ENCODE measurements at regions of chr2 and their contacts with region 1.

Region 1: DNA sequence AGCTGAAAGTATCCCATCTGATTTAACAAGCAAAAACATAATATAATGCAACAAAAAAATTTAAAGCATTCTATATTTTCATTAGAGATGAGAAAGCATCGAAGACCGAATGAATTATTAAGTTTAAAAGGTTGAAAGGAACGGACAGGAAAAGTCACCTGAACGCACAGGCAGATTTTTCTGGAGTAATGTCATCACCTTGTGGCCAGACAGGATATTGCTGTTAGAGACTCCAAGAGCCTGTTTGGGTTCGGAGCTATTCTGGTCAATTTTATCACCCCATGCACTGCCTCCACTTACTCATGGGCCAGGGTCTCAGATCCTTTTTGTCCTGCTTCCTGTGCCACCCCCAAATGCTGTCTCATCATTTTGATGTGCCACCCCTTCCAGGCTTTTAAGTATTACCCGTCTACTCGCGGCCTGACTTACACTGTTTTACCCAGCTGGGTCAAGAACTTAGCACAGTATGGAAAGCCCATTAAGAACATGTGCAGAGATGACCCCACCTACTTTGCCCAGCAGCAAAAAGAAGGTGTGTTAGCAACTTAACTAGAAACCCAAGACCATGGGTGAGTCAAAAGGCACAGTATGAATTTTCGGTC is 27.3 kb downstream of the GKN2 start:
- DNase-seq: peak; percentile 48
- ATAC-seq: peak; percentile 94
- H3K4me3 ChIP-seq: no peak overlapping the region
- H3K27ac ChIP-seq: no peak overlapping the region
- H3K4me1 ChIP-seq: no peaks in the 10 kb centered on the region; a peak in 1 of 4 replicates
- H3K27me3 ChIP-seq: no peaks in the 10 kb centered on the region
- CTCF ChIP-seq: peak; percentile 87 to 89 (median 89)
- POLR2A ChIP-seq: no peak
- RAD21 ChIP-seq: peak; percentile 93

Region 2: DNA sequence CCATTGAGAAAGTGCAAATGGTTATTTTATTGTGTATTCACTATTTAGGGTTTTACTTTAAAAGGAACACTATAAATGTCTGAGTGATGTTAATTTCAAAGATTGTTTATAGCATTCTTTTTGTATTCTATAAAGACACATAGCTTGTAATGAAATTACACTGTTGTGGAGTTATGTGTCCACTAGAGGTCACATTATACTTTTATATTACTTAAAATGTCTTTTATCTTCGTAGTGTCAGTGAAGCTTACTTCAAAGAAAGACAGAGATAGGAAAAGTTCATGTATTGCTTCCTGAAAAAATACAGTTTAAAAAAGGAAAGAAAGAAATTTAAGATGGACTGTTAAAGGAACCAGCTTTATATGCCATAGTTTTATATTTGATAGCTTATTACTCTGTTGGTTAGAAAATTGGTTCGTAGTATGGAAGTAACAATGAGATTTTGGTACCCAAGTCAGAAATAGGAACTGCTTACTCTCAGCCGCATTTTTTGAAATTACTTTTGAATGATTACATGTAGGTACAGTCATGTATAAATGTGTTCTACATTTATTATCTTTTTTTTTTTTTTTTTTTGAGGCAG is 437.5 kb before region 1 on chr2:
- CTCF ChIA-PET with region 1: interaction called, 20 read pairs
- POLR2A ChIA-PET with region 1: no interaction called
- RAD21 ChIA-PET with region 1: interaction called in 1 of 2 experiments, 4 read pairs
- intact Hi-C with region 1: loop called (anchors 1 kb)
- DNase-seq: no peak
- ATAC-seq: peak; percentile 54; the same call in 1 of the 2 replicates
- H3K4me3 ChIP-seq: no peak overlapping the region
- H3K27ac ChIP-seq: no peak overlapping the region
- H3K4me1 ChIP-seq: peaks cover 6 to 8% of the 10 kb centered on the region in 2 experiments; a peak in 3 of 4 replicates
- H3K27me3 ChIP-seq: no peaks in the 10 kb centered on the region
- CTCF ChIP-seq: peak; percentile 35 to 67 (median 38); a peak in 5 of 6 replicates
- POLR2A ChIP-seq: no peak
- RAD21 ChIP-seq: peak; percentile 61

Region 3: GRCh38 chr2:68721482-68722101 is 203.8 kb before region 1 on chr2:
- CTCF ChIA-PET with region 1: interaction called, 28 read pairs
- POLR2A ChIA-PET with region 1: no interaction called
- RAD21 ChIA-PET with region 1: interaction called in 1 of 2 experiments, 6 read pairs
- intact Hi-C with region 1: no loop called
- DNase-seq: peak; percentile 68
- ATAC-seq: peak; percentile 92
- H3K4me3 ChIP-seq: peak overlapping the region in 1 of 2 experiments; percentile 27; a peak in 3 of 4 replicates
- H3K27ac ChIP-seq: peak overlapping the region; percentile 18; the same call in 1 of the 2 replicates
- H3K4me1 ChIP-seq: peaks cover 15 to 20% of the 10 kb centered on the region in 2 experiments
- H3K27me3 ChIP-seq: peaks cover 26% of the 10 kb centered on the region
- CTCF ChIP-seq: no peak
- POLR2A ChIP-seq: no peak
- RAD21 ChIP-seq: no peak

Region 4: DNA sequence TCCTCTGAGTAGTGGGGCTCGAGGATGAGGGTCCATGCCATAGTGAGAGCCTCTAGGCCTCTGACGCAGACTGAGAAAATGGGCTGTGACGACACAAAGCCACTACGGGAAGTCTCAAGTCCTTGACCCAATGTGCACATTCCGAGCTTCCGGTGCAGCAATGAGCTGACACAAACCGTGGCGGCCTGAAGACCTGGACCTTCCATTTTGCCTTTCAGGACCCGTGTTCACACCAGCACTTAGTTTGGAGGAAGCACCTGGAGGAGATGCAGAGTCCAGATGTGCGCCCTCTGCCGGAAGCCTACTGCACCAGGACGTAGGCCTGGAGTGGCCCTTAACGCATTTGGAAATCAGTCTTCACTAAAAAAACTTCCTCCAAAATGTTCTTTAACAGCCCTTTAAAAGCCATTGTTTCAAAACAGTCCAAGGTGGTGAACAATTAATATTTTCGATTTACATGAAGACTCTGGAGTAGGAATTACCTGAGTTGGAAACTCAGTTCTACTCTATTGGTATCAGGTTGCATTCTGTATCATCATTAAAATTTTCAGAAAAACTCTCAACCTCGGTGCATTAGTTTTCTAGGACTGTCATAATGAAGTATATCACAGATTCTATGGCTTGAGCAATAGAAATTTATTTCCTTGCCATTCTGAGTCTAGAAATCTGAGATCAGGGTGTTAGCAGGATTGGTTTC is 88.1 kb before region 1 on chr2:
- CTCF ChIA-PET with region 1: interaction called, 16 read pairs
- POLR2A ChIA-PET with region 1: no interaction called
- RAD21 ChIA-PET with region 1: interaction called, 3 read pairs
- intact Hi-C with region 1: loop called (anchors 5 kb)
- DNase-seq: peak; percentile 58
- ATAC-seq: peak; percentile 98
- H3K4me3 ChIP-seq: no peak overlapping the region
- H3K27ac ChIP-seq: no peak overlapping the region
- H3K4me1 ChIP-seq: peaks cover 0 to 5% of the 10 kb centered on the region in 2 experiments; a peak in 1 of 4 replicates
- H3K27me3 ChIP-seq: no peaks in the 10 kb centered on the region
- CTCF ChIP-seq: peak; percentile 75 to 94 (median 89)
- POLR2A ChIP-seq: no peak
- RAD21 ChIP-seq: peak; percentile 57

Region 5: DNA sequence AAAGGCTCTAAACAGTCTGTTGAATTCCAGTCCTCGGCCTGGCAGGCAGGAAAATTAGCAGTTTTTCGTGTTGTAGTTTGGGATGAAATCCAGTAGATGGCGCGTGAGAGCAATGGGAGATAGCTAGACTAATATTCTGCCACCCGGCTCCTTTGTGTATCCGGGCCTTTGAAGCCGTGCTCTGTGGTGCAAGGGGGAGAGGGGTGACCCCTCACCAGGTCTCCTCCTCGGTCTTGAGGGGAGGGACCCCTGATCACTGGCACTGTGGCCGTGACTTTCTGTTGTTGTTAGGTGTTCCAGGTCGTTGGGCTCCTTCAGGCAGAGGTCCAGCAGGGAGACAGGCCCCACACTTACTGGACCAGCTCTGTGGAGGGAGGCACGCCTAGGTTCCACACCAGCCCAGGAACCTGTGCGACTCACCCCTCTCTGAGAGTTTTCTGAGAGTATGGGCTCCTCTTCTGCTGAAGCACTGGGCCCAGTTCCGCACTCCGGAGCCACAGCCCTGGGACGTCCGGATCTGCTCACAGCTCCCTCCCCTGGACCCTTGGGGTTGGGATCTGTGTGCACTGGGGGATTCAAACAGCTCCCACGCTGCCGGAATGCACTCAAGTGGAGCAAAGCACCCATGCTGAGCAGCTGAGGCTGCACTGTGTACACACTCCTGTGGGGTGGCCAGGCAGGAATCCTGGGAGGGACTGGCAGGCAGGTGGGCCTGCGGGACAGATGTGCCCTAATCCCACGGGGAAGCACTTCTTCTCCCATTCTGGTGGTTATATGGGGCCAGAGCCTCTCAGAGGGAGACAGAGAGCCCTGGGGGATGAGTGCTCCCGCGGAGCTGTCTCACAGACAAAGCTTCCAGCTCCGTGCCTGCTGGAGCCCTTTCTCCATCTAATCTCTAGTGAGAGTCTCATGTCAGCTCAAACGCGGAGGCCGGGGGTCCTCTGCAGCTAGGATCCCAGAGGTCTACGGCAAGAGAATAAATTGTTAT is 18.5 kb after region 1 on chr2:
- CTCF ChIA-PET with region 1: interaction called, 13 read pairs
- POLR2A ChIA-PET with region 1: interaction called, 4 read pairs
- RAD21 ChIA-PET with region 1: no interaction called
- intact Hi-C with region 1: no loop called
- DNase-seq: peak; percentile 34
- ATAC-seq: peak; percentile 94
- H3K4me3 ChIP-seq: no peak overlapping the region
- H3K27ac ChIP-seq: no peak overlapping the region
- H3K4me1 ChIP-seq: peaks cover 0 to 4% of the 10 kb centered on the region in 2 experiments; a peak in 1 of 4 replicates
- H3K27me3 ChIP-seq: no peaks in the 10 kb centered on the region
- CTCF ChIP-seq: peak; percentile 73 to 78 (median 78)
- POLR2A ChIP-seq: no peak
- RAD21 ChIP-seq: peak; percentile 66

Region 6: DNA sequence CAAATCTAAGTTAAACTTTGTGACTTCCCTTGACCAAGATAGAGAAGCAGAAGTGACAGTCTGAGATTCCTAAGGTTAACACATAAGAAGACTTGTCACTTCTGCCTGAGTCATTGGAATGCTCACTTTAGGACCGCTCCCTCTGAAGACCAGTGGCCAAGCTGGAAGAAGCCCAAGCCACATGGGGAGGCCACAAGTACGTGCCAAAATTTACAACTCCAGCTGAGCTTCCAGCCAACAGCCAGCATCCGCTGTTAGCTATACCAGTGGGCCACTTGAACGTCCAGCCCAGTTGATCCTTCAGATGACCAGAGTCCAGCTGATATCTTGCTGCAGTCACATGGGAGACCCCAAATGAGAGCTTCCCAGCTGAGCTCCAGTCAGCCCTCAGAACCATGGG is 69.5 kb after region 1 on chr2:
- CTCF ChIA-PET with region 1: no interaction called
- POLR2A ChIA-PET with region 1: no interaction called
- RAD21 ChIA-PET with region 1: no interaction called
- intact Hi-C with region 1: no loop called
- DNase-seq: no peak
- ATAC-seq: no peak; the same call in 1 of the 2 replicates
- H3K4me3 ChIP-seq: no peak overlapping the region
- H3K27ac ChIP-seq: no peak overlapping the region
- H3K4me1 ChIP-seq: no peaks in the 10 kb centered on the region; a peak in 1 of 4 replicates
- H3K27me3 ChIP-seq: no peaks in the 10 kb centered on the region
- CTCF ChIP-seq: no peak
- POLR2A ChIP-seq: no peak
- RAD21 ChIP-seq: no peak